SK-N-SH (cell line): ENCODE measurements at regions of chr19 and their contacts with region 1.

Region 1: GRCh38 chr19:12777217-12778016 is 2.1 kb upstream of the HOOK2 start:
- DNase-seq: peak; percentile 89
- H3K4me3 ChIP-seq: peak overlapping the region; percentile 52 to 64
- H3K27ac ChIP-seq: peak overlapping the region; percentile 90 to 98
- H3K4me1 ChIP-seq: peaks cover 24 to 41% of the 10 kb centered on the region in 2 experiments; a peak in 3 of 4 replicates
- H3K27me3 ChIP-seq: no peaks in the 10 kb centered on the region
- CTCF ChIP-seq: peak; percentile 93
- EP300 ChIP-seq: no peak; a peak in 1 of 4 replicates
- RAD21 ChIP-seq: peak; percentile 83

Region 2: GRCh38 chr19:12440541-12441316 is 336.7 kb before region 1 on chr19 and contains the start of gene ZNF443:
- CTCF ChIA-PET with region 1: no interaction called
- POLR2A ChIA-PET with region 1: no interaction called
- DNase-seq: peak; percentile 90
- H3K4me3 ChIP-seq: peak within 1 kb of the TSS; percentile 74 to 76
- H3K27ac ChIP-seq: peak within 1 kb of the TSS; percentile 52 to 84
- H3K4me1 ChIP-seq: no peaks in the 10 kb centered on the region; a peak in 1 of 4 replicates
- H3K27me3 ChIP-seq: no peaks in the 10 kb centered on the region
- CTCF ChIP-seq: no peak
- EP300 ChIP-seq: no peak
- RAD21 ChIP-seq: no peak
- polyA plus RNA-seq, gene ZNF443: 0.92 and 1.5 TPM in 2 replicates

Region 3: DNA sequence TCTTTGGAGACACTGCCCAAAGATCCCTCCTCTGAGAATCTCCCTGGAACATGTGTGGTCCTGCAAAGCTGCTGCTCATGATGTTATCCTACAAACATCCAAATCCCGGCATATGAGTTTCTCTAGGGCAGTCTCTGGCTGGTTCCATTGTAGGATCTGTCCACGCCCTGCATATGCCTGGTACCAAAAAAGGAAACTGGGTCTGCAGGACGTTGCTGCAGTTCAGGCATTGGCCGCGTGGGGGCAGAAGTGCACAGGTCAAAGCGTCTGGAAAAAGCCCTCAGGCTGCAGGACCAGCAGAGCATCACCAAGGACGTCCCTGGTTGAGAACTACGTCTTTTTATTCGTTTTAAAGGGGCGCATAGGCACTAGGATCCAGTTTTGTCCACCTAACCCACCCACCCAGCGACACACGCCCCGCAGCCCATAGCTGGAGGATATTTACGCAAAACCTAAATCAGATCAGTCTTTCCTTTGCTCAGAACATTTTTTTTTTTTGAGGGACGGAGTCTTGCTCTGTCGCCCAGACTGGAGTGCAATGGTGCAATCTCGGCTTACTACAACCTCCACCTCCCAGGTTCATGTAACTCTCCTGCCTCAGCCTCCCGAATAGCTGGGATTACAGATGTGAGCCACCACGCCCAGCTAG is 213.3 kb before region 1 on chr19:
- CTCF ChIA-PET with region 1: no interaction called
- POLR2A ChIA-PET with region 1: no interaction called
- DNase-seq: peak; percentile 90
- H3K4me3 ChIP-seq: peak overlapping the region; percentile 9 to 36; a peak in 2 of 4 replicates
- H3K27ac ChIP-seq: no peak overlapping the region
- H3K4me1 ChIP-seq: peaks cover 0 to 3% of the 10 kb centered on the region in 2 experiments; a peak in 1 of 4 replicates
- H3K27me3 ChIP-seq: no peaks in the 10 kb centered on the region
- CTCF ChIP-seq: peak; percentile 96
- EP300 ChIP-seq: no peak
- RAD21 ChIP-seq: peak; percentile 90

Region 4: GRCh38 chr19:12703046-12703445 is 74.4 kb before region 1 on chr19:
- CTCF ChIA-PET with region 1: no interaction called
- POLR2A ChIA-PET with region 1: no interaction called
- DNase-seq: peak; percentile 90
- H3K4me3 ChIP-seq: no peak overlapping the region
- H3K27ac ChIP-seq: no peak overlapping the region
- H3K4me1 ChIP-seq: no peaks in the 10 kb centered on the region
- H3K27me3 ChIP-seq: no peaks in the 10 kb centered on the region
- CTCF ChIP-seq: no peak
- EP300 ChIP-seq: no peak
- RAD21 ChIP-seq: no peak

Region 5: DNA sequence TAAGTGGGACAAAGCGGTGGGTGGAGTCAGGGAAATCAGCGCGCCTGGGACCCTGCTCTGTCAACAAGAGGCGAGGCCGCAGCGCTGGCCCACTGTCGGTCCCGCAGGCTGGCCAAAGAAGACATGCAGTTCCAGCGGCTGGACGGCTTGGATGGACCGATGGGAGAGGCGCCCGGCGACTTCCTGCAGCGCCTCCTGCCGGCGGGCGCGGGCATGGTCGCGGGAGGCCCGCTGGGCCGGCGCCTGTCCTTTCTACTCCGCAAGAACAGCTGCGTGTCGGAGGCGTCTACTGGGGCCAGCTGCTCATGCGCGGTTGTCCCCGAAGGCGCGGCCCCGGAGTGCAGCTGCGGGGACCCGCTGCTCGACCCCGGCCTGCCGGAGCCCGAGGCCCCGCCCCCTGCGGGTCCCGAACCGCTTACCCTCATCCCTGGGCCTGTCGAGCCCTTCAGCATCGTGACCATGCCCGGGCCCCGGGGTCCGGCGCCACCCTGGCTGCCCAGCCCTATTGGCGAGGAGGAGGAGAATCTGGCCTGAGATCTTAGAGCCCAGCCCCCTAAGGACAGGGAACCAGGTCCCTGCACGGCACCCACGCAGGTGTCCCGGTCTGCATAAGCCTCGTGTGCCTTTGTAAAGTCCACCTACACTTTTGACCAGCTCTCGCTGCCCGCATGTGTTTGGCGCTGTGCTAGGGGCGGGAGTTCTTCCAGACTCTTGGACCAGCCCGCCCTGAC is 19.7 kb before region 1 on chr19:
- CTCF ChIA-PET with region 1: interaction called, 38 read pairs
- POLR2A ChIA-PET with region 1: interaction called, 3 read pairs
- DNase-seq: peak; percentile 94
- H3K4me3 ChIP-seq: peak overlapping the region; percentile 31 to 44; a peak in 3 of 4 replicates
- H3K27ac ChIP-seq: no peak overlapping the region
- H3K4me1 ChIP-seq: no peaks in the 10 kb centered on the region; a peak in 1 of 4 replicates
- H3K27me3 ChIP-seq: peaks cover 12% of the 10 kb centered on the region; the same call in 1 of the 2 replicates
- CTCF ChIP-seq: peak; percentile 84
- EP300 ChIP-seq: no peak
- RAD21 ChIP-seq: peak; percentile 60

Region 6: DNA sequence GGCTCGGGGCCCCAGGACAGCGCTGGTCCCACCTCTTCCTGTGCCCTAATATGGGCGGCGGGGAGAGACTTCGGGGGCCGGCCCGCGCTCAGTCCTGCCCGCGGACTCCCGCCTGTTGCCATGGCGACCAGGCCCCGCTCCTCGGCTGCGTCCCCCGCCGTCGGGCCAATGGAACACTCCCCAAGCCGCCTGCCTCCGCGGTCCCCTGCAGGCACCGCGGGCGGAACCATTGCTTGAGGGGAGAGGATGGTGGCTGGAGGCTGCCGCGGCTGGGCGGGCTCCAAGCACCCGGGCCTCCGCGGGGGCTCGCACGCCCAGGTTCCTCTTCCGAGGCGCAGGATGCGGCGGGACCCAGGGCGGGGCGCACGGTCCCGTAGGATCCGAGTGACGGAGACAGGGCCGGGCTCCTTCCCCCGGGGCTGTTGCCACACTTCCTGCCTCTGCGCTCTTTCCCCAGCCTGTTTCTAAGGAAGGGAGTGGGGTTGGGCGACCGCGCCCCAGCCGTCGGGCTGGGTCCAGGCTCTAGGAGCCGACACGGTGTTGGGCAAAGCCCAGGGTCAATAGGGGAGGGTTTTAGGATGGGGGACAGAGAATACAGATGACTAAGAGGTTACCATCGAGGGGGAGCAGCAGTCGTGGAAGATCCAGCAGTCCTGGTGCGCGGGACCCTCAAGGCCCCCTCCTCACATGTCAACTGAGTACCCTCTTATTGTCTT is 12.6 kb after region 1 on chr19:
- CTCF ChIA-PET with region 1: interaction called, 447 read pairs
- POLR2A ChIA-PET with region 1: interaction called, 88 read pairs
- DNase-seq: peak; percentile 92
- H3K4me3 ChIP-seq: peak overlapping the region; percentile 55 to 80
- H3K27ac ChIP-seq: peak overlapping the region; percentile 96 to 97
- H3K4me1 ChIP-seq: peaks cover 38 to 53% of the 10 kb centered on the region in 2 experiments
- H3K27me3 ChIP-seq: no peaks in the 10 kb centered on the region
- CTCF ChIP-seq: no peak
- EP300 ChIP-seq: no peak
- RAD21 ChIP-seq: no peak

Region 7: GRCh38 chr19:12825254-12826131 is 48.1 kb after region 1 on chr19:
- CTCF ChIA-PET with region 1: interaction called, 10 read pairs
- POLR2A ChIA-PET with region 1: interaction called, 4 read pairs
- DNase-seq: peak; percentile 88
- H3K4me3 ChIP-seq: peak overlapping the region in 1 of 2 experiments; percentile 15; a peak in 1 of 4 replicates
- H3K27ac ChIP-seq: no peak overlapping the region
- H3K4me1 ChIP-seq: peaks cover 0 to 8% of the 10 kb centered on the region in 2 experiments; a peak in 1 of 4 replicates
- H3K27me3 ChIP-seq: no peaks in the 10 kb centered on the region
- CTCF ChIP-seq: peak; percentile 48
- EP300 ChIP-seq: no peak
- RAD21 ChIP-seq: peak; percentile 36